MCF 10A (cell line): ENCODE measurements at regions of chr16 and their contacts with region 1.

Region 1: GRCh38 chr16:29943846-29944669 is 17.8 kb upstream of the TMEM219 start:
- DNase-seq: peak; percentile 96
- H3K4me3 Mint-ChIP-seq: peak overlapping the region; percentile 24
- H3K27ac Mint-ChIP-seq: peak overlapping the region; percentile 65
- H3K4me1 Mint-ChIP-seq: peaks cover 8% of the 10 kb centered on the region
- H3K27me3 Mint-ChIP-seq: no peaks in the 10 kb centered on the region
- CTCF ChIP-seq: no peak

Region 2: DNA sequence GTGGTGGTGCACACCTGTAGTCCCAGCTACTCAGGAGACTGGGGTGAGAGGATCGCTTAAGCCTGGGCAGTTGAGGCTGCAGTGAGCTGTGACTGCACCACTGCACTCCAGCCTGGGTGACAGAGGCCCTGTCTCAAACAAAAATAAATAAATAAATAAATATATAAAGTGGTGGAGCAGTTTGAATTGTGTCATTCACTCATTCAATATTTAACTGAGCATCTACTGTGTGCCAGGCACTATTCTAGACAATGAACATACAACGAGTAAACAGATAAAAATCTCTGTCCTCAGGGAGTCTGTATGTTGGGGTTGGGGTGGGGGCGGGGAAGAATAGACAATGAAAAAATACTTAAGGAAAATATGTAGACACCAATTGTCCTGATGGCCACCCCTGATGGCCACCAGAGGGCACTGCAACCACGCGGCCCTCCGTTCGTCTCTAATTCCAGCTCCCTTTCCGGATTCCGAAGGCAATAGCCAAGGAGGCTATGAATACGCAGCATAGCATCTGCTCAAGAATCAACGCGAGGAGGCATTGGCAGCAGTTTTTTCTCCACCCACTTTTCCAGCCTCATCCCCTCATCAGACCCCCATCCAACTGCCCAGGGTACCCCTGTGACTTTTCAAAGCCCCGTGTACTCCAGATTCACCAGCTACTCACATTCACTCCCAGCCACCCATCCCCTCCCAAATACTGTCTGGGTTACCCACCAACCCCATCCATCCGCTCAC is 243.6 kb before region 1 on chr16:
- CTCF ChIA-PET with region 1: no interaction called
- POLR2A ChIA-PET with region 1: no interaction called
- intact Hi-C with region 1: no loop called
- DNase-seq: peak; percentile 87
- H3K4me3 Mint-ChIP-seq: no peak overlapping the region
- H3K27ac Mint-ChIP-seq: no peak overlapping the region
- H3K4me1 Mint-ChIP-seq: no peaks in the 10 kb centered on the region
- H3K27me3 Mint-ChIP-seq: peaks cover 22% of the 10 kb centered on the region
- CTCF ChIP-seq: peak; percentile 95

Region 3: DNA sequence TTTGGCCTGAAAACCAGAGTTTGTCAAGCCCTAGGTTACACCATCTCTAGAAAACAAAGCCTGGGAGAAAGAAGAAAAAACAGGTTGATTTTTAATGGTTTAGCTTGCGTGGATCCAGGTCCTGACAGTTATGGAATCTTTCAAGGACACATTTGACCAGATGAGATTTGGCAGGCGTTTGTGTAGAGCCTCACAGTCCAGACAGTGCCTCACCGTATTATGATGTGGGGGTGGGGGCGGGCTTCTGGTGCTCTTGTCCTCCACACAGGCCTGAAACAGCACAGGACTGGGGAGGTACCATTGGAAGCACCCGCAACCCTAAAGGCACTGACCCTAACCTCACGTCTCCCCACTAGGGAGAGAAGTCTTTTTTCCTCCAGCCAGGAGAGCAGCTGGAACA is 104.2 kb before region 1 on chr16:
- CTCF ChIA-PET with region 1: no interaction called
- POLR2A ChIA-PET with region 1: no interaction called
- intact Hi-C with region 1: no loop called
- DNase-seq: no peak
- H3K4me3 Mint-ChIP-seq: no peak overlapping the region
- H3K27ac Mint-ChIP-seq: no peak overlapping the region
- H3K4me1 Mint-ChIP-seq: no peaks in the 10 kb centered on the region
- H3K27me3 Mint-ChIP-seq: no peaks in the 10 kb centered on the region
- CTCF ChIP-seq: no peak

Region 4: GRCh38 chr16:29961479-29962343 is 17.7 kb after region 1 on chr16 and contains the start of gene TMEM219:
- CTCF ChIA-PET with region 1: interaction called, 25 read pairs
- POLR2A ChIA-PET with region 1: interaction called, 34 read pairs
- intact Hi-C with region 1: no loop called
- DNase-seq: peak; percentile 77
- H3K4me3 Mint-ChIP-seq: peak within 1 kb of the TSS; percentile 89
- H3K27ac Mint-ChIP-seq: peak within 1 kb of the TSS; percentile 77
- H3K4me1 Mint-ChIP-seq: peaks cover 16% of the 10 kb centered on the region
- H3K27me3 Mint-ChIP-seq: no peaks in the 10 kb centered on the region
- CTCF ChIP-seq: peak; percentile 14
- total RNA-seq, gene TMEM219: 62.1 and 68.1 TPM in 2 replicates

Region 5: GRCh38 chr16:30040221-30040620 is 96.2 kb after region 1 on chr16:
- CTCF ChIA-PET with region 1: no interaction called
- POLR2A ChIA-PET with region 1: no interaction called
- intact Hi-C with region 1: no loop called
- DNase-seq: no peak
- H3K4me3 Mint-ChIP-seq: no peak overlapping the region
- H3K27ac Mint-ChIP-seq: no peak overlapping the region
- H3K4me1 Mint-ChIP-seq: no peaks in the 10 kb centered on the region
- H3K27me3 Mint-ChIP-seq: no peaks in the 10 kb centered on the region
- CTCF ChIP-seq: no peak

Region 6: DNA sequence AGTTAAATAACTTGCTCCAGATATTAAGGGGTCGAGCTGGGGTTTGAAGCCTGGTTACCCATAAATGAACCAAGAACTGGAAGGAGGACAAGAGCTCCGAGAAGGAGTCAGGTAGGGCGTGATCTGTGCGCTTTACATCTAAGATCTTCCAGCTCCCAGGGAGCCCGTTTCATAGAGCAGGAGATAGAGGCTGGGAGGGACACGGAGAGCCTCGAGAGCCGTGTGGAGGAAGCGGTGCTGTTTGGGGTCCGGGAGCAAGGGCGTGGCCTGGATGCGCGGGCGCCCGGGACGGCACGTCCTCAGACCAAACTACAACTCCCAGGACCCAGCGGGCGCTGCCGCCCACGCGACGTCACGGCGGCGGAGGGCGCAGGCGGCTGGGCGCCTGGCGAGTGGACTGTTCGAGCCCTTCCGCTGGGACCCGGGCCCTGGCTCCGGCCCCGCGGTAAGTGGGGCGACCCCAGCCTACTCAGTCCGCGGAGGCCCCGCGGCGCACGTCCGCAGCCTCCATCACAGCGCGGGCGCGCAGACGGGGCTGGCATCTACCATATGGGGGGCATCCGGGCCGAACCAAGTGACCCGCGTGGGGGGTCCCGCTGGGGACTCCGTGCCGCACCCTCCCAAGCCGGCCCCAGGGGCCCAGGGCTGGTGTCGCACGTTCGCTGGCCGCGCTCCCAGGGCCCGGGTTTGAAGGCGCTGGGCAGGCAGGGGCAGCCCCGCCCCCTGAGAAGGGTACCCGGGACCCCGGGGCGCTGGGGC is 1164.2 kb after region 1 on chr16 and contains the start of gene BCKDK:
- CTCF ChIA-PET with region 1: no interaction called
- POLR2A ChIA-PET with region 1: no interaction called
- intact Hi-C with region 1: no loop called
- DNase-seq: peak; percentile 60
- H3K4me3 Mint-ChIP-seq: peak within 1 kb of the TSS; percentile 73
- H3K27ac Mint-ChIP-seq: no peak within 1 kb of the TSS
- H3K4me1 Mint-ChIP-seq: peaks cover 20% of the 10 kb centered on the region
- H3K27me3 Mint-ChIP-seq: no peaks in the 10 kb centered on the region
- CTCF ChIP-seq: no peak
- total RNA-seq, gene BCKDK: 31.7 and 41.0 TPM in 2 replicates